ENCODE measurements at regions of chr1 and their contacts with region 1.

Region 1: DNA sequence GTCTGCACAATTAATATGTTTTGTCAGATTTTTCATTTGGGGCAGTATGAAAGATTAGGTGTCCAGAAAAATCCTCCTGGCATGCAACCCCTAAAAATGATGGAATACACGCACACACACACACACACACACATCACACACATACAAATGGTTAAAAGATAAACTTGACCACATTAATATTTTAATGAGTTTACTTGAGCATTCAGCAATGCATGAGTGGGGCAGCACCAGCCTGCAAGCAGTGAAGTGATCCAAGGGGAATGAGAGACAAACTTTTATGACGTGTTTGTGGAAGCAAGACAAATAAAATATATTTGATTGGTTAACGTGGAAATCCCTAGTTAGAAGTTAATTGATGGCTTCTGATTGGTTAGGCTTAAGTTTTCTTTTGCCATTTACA is 29.1 kb upstream of the SOAT1 start:
- DNase-seq: no peak
- ATAC-seq: no peak
- H3K4me3 Mint-ChIP-seq: no peak overlapping the region
- H3K27ac Mint-ChIP-seq: no peak overlapping the region
- H3K4me1 Mint-ChIP-seq: peaks cover 6% of the 10 kb centered on the region; the same call in 1 of the 2 replicates
- H3K27me3 Mint-ChIP-seq: no peaks in the 10 kb centered on the region; the same call in 1 of the 2 replicates
- CTCF ChIP-seq: no peak

Region 2: DNA sequence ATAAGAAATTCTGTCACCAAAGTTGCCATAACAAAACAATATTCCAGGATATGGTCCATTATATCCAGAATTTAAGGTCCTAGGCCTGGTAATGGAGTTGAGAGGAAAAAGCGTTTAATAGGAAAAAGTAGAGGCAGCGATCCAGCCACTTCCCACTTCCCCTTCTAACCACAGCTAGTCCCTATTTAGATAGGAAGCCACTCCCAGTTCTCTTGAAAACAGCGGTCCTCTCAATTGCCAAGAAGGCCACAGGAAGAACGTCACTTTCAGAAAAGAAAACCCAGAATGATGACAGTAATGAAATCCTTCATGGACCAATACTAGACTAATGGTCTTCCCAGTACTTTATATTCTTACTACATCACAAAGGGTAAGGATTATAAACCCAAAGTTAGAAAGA is 73.6 kb before region 1 on chr1:
- CTCF ChIA-PET with region 1: no interaction called
- POLR2A ChIA-PET with region 1: interaction called, 14 read pairs
- DNase-seq: no peak
- ATAC-seq: no peak
- H3K4me3 Mint-ChIP-seq: no peak overlapping the region
- H3K27ac Mint-ChIP-seq: no peak overlapping the region
- H3K4me1 Mint-ChIP-seq: peaks cover 13% of the 10 kb centered on the region
- H3K27me3 Mint-ChIP-seq: no peaks in the 10 kb centered on the region
- CTCF ChIP-seq: no peak